Breast epithelium (tissue), 4 donors: ENCODE measurements at regions of chr3 and their contacts with region 1.

Region 1: GRCh38 chr3:117562000-117562399 is 852.4 kb downstream of the TUSC7 start:
- DNase-seq: no peak
- H3K4me3 ChIP-seq: no peak overlapping the region
- H3K27ac ChIP-seq: no peak overlapping the region
- H3K4me1 ChIP-seq: no peaks in the 10 kb centered on the region
- H3K27me3 ChIP-seq: no peaks in the 10 kb centered on the region
- CTCF ChIP-seq: no peak
- POLR2A ChIP-seq: no peak

Region 2: GRCh38 chr3:117618462-117618861 is 56.5 kb after region 1 on chr3:
- intact Hi-C with region 1: loop called (anchors 2 kb)
- DNase-seq: no peak
- H3K4me3 ChIP-seq: no peak overlapping the region
- H3K27ac ChIP-seq: no peak overlapping the region
- H3K4me1 ChIP-seq: no peaks in the 10 kb centered on the region
- H3K27me3 ChIP-seq: no peaks in the 10 kb centered on the region
- CTCF ChIP-seq: no peak
- POLR2A ChIP-seq: no peak